ENCODE measurements at regions of chr1 and their contacts with region 1.

Region 1: DNA sequence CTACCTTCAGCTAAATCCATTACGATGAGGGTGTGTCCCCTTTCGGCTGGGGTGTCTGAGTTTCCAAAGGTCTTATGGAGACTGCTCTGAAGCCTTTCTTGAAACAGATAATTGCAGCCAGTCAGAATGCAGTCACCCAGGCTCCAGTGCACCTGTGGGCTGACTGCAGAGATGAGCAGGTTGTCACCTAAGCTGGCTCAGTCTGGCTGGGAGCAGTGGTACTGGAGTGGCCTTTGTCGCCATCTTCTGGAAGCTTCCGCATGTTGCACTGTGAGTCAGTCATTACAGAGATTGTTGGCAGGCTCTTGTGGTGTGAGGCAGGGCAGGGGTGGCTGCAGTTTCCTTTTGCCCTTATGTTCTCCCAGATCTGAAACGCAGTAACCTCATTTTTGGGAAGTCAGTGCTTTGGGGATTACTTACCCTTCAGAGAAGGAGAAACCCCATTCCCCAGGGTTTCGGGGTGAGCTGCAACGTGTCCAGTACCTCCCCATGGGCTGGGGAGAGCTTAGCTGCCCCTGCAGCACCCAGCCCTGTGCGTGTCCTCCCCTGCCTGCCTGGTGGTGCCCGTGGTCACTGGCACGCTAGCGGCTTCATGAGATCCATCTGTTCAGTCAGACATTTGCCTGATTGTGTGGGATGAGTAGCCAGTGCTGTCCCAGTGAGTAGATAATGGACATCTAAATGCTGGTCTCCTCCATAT is 48.0 kb downstream of the SMYD2 start:
- DNase-seq: peak; percentile 44
- H3K4me3 ChIP-seq: no peak overlapping the region
- H3K27ac ChIP-seq: no peak overlapping the region
- H3K27me3 ChIP-seq: no peaks in the 10 kb centered on the region
- CTCF ChIP-seq: peak; percentile 92

Region 2: DNA sequence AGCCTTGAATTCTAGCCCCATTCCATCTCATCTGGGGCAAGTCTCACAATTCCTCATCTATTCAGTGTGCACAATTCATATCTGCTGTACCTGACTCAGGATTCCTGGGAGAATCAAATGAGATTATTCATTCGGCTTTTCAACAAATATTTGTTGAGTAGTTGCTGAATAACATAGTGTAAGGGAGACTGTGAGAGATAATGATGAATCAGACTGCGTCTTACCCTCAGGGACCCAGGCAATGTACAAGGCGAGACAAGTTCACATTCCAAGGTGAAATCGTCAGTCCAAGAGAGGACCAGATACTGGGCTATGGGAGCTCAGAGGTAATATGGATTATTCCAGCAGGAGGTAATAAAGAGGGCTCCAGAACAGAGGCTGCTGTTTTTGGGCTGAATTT is 115.8 kb before region 1 on chr1:
- CTCF ChIA-PET with region 1: interaction called, 429 read pairs
- POLR2A ChIA-PET with region 1: interaction called, 3 read pairs
- DNase-seq: no peak
- H3K4me3 ChIP-seq: no peak overlapping the region
- H3K27ac ChIP-seq: no peak overlapping the region
- H3K27me3 ChIP-seq: peaks cover 15% of the 10 kb centered on the region
- CTCF ChIP-seq: no peak

Region 3: GRCh38 chr1:214281720-214282629 is 46.9 kb before region 1 on chr1:
- CTCF ChIA-PET with region 1: interaction called, 16 read pairs
- POLR2A ChIA-PET with region 1: no interaction called
- DNase-seq: peak; percentile 36
- H3K4me3 ChIP-seq: peak overlapping the region; percentile 82
- H3K27ac ChIP-seq: peak overlapping the region; percentile 59
- H3K27me3 ChIP-seq: no peaks in the 10 kb centered on the region
- CTCF ChIP-seq: no peak

Region 4: GRCh38 chr1:214316593-214316992 is 12.3 kb before region 1 on chr1:
- CTCF ChIA-PET with region 1: interaction called, 70 read pairs
- POLR2A ChIA-PET with region 1: no interaction called
- DNase-seq: no peak
- H3K4me3 ChIP-seq: no peak overlapping the region
- H3K27ac ChIP-seq: no peak overlapping the region
- H3K27me3 ChIP-seq: no peaks in the 10 kb centered on the region
- CTCF ChIP-seq: no peak

Region 5: GRCh38 chr1:214537219-214537618 is 208.3 kb after region 1 on chr1:
- CTCF ChIA-PET with region 1: interaction called, 15 read pairs
- POLR2A ChIA-PET with region 1: no interaction called
- DNase-seq: no peak
- H3K4me3 ChIP-seq: no peak overlapping the region
- H3K27ac ChIP-seq: no peak overlapping the region
- H3K27me3 ChIP-seq: no peaks in the 10 kb centered on the region
- CTCF ChIP-seq: no peak

Region 6: GRCh38 chr1:214590696-214591095 is 261.8 kb after region 1 on chr1:
- CTCF ChIA-PET with region 1: interaction called, 278 read pairs
- POLR2A ChIA-PET with region 1: no interaction called
- DNase-seq: no peak
- H3K4me3 ChIP-seq: no peak overlapping the region
- H3K27ac ChIP-seq: no peak overlapping the region
- H3K27me3 ChIP-seq: no peaks in the 10 kb centered on the region
- CTCF ChIP-seq: no peak

Region 7: GRCh38 chr1:214621236-214621635 is 292.3 kb after region 1 on chr1:
- CTCF ChIA-PET with region 1: interaction called, 102 read pairs
- POLR2A ChIA-PET with region 1: no interaction called
- DNase-seq: no peak
- H3K4me3 ChIP-seq: no peak overlapping the region
- H3K27ac ChIP-seq: no peak overlapping the region
- H3K27me3 ChIP-seq: no peaks in the 10 kb centered on the region
- CTCF ChIP-seq: no peak

Region 8: GRCh38 chr1:214670098-214670497 is 341.2 kb after region 1 on chr1:
- CTCF ChIA-PET with region 1: no interaction called
- POLR2A ChIA-PET with region 1: no interaction called
- DNase-seq: no peak
- H3K4me3 ChIP-seq: no peak overlapping the region
- H3K27ac ChIP-seq: peak overlapping the region; percentile 41
- H3K27me3 ChIP-seq: no peaks in the 10 kb centered on the region
- CTCF ChIP-seq: no peak

Measured in AG04450 (cell line).